HEK293 (cell line): ENCODE measurements at regions of chr1 and their contacts with region 1.

Region 1: GRCh38 chr1:117284399-117285215 is 73.9 kb upstream of the VTCN1 start:
- H3K4me3 ChIP-seq: no peak overlapping the region
- H3K27ac ChIP-seq: no peak overlapping the region
- H3K4me1 ChIP-seq: no peaks in the 10 kb centered on the region
- CTCF ChIP-seq: peak; percentile 64

Region 2: DNA sequence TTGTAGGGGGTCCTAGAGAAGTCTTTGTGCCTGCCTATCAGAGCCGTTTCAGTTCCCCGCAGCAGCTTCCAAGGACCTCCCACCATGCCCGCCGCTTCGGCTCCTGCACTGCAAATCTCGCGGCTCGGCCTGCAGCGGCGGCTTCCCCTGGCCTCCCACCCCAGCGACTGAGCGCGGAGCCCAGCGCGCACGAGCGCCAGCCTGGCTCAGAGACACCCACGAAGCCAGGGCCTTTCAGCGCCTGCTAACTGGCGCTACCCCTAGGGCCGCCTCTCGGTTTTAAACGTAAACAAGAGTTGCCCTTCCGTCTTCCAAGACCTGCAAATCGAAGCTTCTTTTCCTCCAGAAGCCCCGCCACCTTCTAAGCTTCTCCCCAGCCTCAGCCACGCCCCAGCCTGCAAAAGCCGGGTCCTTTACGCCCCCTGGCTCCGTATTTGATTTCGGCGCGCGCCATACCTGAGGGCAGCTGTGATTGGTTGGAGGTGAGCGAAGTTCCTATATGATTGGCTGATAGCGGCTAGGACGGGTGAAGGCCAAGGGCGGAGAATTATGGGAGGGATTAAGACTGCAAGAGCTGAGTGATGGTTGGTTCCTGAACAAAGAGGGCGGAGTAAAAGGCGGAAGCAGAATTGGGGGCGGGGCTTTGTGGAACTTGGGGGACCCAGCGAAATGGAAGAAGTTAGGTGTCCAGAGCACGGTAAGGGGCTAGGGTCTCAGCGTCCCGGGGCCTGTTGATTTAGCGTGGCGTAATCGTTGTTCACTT is 224.7 kb before region 1 on chr1 and contains the start of gene TTF2:
- CTCF ChIA-PET with region 1: interaction called, 13 read pairs
- POLR2A ChIA-PET with region 1: no interaction called
- H3K4me3 ChIP-seq: peak within 1 kb of the TSS; percentile 90
- H3K27ac ChIP-seq: peak within 1 kb of the TSS; percentile 86
- H3K4me1 ChIP-seq: no peaks in the 10 kb centered on the region
- CTCF ChIP-seq: peak; percentile 71

Region 3: GRCh38 chr1:117093870-117094621 is 190.6 kb before region 1 on chr1:
- CTCF ChIA-PET with region 1: interaction called, 17 read pairs
- POLR2A ChIA-PET with region 1: no interaction called
- H3K4me3 ChIP-seq: no peak overlapping the region
- H3K27ac ChIP-seq: no peak overlapping the region
- H3K4me1 ChIP-seq: no peaks in the 10 kb centered on the region
- CTCF ChIP-seq: no peak

Region 4: GRCh38 chr1:117128323-117129079 is 156.1 kb before region 1 on chr1:
- CTCF ChIA-PET with region 1: interaction called, 26 read pairs
- POLR2A ChIA-PET with region 1: no interaction called
- H3K4me3 ChIP-seq: no peak overlapping the region
- H3K27ac ChIP-seq: no peak overlapping the region
- H3K4me1 ChIP-seq: no peaks in the 10 kb centered on the region
- CTCF ChIP-seq: no peak

Region 5: DNA sequence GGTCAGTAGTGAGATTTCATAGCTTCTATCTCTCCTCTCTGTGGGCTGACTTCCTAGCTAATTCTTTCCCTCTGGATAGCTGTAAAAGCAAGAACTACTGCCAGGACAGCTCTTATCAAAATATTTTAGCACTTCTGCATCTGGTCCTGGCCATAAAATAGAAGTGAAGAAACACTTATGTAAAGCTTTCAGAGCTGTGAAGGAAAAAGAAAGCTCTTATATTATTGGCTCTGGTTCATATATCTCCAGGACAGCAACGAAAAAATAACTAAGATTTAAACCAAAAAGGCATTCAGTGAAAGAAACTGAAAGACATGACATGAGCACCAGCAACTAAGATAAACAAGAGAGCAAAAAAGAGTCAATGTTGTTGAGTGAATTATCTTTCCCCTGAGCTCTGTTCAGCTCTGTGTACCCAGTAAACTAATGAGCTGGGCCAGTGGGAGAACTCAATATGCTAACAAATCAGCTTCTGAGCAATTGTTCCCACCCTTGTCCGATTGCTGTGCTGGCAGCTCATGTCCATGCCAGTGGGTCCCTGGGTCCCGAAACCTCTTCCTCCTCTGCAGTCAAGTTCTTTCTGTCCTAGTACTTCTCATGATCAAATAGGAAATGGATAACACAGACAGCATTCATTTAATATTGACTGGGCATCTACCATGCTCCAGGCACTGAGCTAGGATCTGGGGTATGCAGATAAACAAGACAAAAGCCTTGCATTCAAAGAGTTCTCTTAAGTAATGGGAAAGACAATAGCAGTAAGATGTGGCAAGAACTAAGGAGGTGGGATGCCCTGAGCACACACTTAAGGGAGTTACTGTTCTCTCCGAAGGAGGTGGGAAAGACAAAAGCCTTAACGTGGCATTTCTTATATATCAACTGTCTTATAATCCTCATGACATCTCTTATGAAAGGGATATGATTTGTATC is 37.3 kb after region 1 on chr1:
- CTCF ChIA-PET with region 1: interaction called, 12 read pairs
- POLR2A ChIA-PET with region 1: no interaction called
- H3K4me3 ChIP-seq: no peak overlapping the region
- H3K27ac ChIP-seq: no peak overlapping the region; the same call in 1 of the 2 replicates
- H3K4me1 ChIP-seq: no peaks in the 10 kb centered on the region
- CTCF ChIP-seq: no peak

Region 6: DNA sequence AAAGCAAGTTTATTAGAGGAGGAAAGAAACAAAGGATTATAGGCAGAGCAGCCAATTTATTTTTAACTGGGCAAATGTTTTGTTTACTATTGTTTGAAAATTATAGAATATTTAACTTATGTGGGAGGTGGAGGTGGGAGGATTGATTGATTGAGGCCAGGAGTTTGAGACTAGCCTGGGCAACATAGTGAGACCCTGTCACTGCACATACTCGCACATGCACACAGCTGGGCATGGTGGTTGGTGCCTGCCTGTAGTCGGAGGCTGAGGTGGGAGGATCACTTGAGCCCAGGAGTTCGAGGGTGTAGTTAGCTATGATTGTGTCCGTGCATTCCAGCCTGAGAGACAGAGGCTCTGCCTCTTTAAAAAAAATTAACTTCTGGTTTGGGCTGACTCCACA is 89.3 kb after region 1 on chr1:
- CTCF ChIA-PET with region 1: no interaction called
- POLR2A ChIA-PET with region 1: no interaction called
- H3K4me3 ChIP-seq: no peak overlapping the region
- H3K27ac ChIP-seq: no peak overlapping the region
- H3K4me1 ChIP-seq: 0 out of 2 replicates have a peak, but pooled peaks cover 3% of the 10 kb centered on the region
- CTCF ChIP-seq: no peak

Region 7: GRCh38 chr1:117572546-117572945 is 287.9 kb after region 1 on chr1:
- CTCF ChIA-PET with region 1: no interaction called
- POLR2A ChIA-PET with region 1: no interaction called
- H3K4me3 ChIP-seq: no peak overlapping the region
- H3K27ac ChIP-seq: no peak overlapping the region
- H3K4me1 ChIP-seq: no peaks in the 10 kb centered on the region
- CTCF ChIP-seq: no peak